ENCODE measurements at regions of chr14 and their contacts with region 1.

Region 1: DNA sequence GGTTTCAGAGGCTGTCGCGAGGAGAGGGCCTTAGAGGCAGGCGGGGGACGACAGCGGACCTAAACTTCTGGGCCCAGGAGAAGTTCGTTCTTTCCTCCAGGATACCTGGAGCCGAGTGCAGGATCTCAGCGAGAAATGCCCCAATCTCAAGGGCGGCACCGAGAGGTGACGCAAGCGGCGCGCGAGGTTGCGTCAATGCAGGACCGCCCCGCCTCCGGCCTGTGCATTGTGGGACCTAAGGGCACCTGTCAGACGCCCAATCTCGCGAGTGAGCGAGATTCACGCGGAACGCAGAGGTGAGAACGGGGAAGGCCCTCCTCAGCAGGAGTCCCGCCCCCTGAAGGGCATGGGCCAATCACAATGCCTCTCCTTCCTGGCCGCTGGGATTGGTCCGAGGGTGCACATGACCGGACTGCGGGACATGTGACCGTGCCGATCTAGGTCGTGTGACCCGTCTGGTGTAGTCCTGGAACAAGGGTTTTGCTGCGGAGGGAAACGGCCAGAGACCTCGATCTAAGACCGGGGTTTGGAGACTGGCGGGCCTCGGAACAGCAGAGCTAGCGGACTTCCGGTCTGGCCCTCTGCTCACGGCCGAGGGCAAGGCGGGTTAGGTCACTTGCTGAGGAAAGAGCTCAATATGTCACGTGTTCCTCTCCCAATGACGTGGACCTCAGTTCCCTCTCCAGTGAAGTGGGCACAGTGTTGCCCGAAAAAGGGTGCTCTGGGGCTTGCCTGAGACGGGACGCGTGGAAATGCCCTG is 16.3 kb upstream of the DYNC1H1 start:
- DNase-seq: peak; percentile 99 to 100 (median 100)
- H3K4me3 ChIP-seq: peak overlapping the region; percentile 87 to 98
- H3K4me3 Mint-ChIP-seq: peak overlapping the region; percentile 92 to 99 (median 96)
- H3K27ac ChIP-seq: peak overlapping the region; percentile 94
- H3K27ac Mint-ChIP-seq: peak overlapping the region; percentile 99 to 100 (median 100)
- H3K4me1 ChIP-seq: peaks cover 13% of the 10 kb centered on the region
- H3K4me1 Mint-ChIP-seq: peaks cover 6 to 31% (median 21%) of the 10 kb centered on the region in 4 donors
- H3K27me3 ChIP-seq: peaks cover 5% of the 10 kb centered on the region
- H3K27me3 Mint-ChIP-seq: peaks cover 9 to 16% of the 10 kb centered on the region in 2 donors

Region 2: DNA sequence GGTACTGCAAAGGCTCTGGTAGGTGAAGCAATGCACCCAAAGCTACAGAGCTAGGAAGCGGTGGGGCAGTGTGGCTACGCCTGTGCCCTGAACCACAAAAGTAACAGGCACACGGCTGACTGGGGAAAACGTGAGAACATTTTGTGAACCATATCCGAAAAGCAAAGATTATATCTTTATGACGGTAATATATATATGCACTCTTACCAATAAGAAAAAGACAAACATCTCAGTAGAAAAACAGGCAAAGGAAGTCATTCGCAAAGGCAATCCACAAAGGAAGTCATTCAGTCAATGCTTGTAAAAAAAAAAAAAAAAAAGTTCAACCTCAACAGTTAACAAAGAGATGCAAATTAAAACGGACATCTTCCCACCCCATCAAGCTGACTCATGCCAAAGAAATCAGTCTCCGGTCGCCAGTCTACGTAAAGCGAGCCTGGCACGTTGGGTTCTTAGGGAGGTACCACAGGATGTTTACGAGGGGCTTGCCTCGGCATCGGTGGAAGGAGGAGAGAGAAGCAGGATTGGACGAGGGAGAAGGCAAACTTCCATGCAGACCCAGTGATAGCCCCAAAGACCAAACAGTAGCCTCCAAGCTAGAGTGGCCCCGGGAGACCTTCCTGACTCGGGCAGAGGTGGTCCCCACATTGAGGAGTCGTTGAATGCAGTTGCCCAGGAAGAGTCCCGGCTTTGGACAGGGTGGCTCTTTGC is 226.0 kb before region 1 on chr14:
- CTCF ChIA-PET with region 1: no interaction called
- POLR2A ChIA-PET with region 1: interaction called, 7 read pairs
- intact Hi-C with region 1: loop called (anchors 1 kb)
- DNase-seq: peak; percentile 90 to 93 (median 91)
- H3K4me3 ChIP-seq: peak overlapping the region in 1 of 2 donors; percentile 55
- H3K4me3 Mint-ChIP-seq: peak overlapping the region; percentile 66 to 92 (median 82)
- H3K27ac ChIP-seq: peak overlapping the region; percentile 84
- H3K27ac Mint-ChIP-seq: peak overlapping the region; percentile 92 to 100 (median 97)
- H3K4me1 ChIP-seq: peaks cover 61% of the 10 kb centered on the region
- H3K4me1 Mint-ChIP-seq: peaks cover 35 to 69% (median 46%) of the 10 kb centered on the region in 4 donors
- H3K27me3 ChIP-seq: no peaks in the 10 kb centered on the region
- H3K27me3 Mint-ChIP-seq: no peaks in the 10 kb centered on the region

Region 3: GRCh38 chr14:102353126-102353619 is 405.1 kb after region 1 on chr14:
- CTCF ChIA-PET with region 1: no interaction called
- POLR2A ChIA-PET with region 1: no interaction called
- intact Hi-C with region 1: no loop called
- DNase-seq: no peak
- H3K4me3 ChIP-seq: no peak overlapping the region
- H3K4me3 Mint-ChIP-seq: no peak overlapping the region
- H3K27ac ChIP-seq: no peak overlapping the region
- H3K27ac Mint-ChIP-seq: no peak overlapping the region
- H3K4me1 ChIP-seq: no peaks in the 10 kb centered on the region
- H3K4me1 Mint-ChIP-seq: peaks cover 0 to 11% (median under 1%) of the 10 kb centered on the region in 4 donors
- H3K27me3 ChIP-seq: no peaks in the 10 kb centered on the region
- H3K27me3 Mint-ChIP-seq: no peaks in the 10 kb centered on the region